Gastrocnemius medialis (tissue), 4 donors: ENCODE measurements at regions of chr2 and their contacts with region 1.

Region 1: DNA sequence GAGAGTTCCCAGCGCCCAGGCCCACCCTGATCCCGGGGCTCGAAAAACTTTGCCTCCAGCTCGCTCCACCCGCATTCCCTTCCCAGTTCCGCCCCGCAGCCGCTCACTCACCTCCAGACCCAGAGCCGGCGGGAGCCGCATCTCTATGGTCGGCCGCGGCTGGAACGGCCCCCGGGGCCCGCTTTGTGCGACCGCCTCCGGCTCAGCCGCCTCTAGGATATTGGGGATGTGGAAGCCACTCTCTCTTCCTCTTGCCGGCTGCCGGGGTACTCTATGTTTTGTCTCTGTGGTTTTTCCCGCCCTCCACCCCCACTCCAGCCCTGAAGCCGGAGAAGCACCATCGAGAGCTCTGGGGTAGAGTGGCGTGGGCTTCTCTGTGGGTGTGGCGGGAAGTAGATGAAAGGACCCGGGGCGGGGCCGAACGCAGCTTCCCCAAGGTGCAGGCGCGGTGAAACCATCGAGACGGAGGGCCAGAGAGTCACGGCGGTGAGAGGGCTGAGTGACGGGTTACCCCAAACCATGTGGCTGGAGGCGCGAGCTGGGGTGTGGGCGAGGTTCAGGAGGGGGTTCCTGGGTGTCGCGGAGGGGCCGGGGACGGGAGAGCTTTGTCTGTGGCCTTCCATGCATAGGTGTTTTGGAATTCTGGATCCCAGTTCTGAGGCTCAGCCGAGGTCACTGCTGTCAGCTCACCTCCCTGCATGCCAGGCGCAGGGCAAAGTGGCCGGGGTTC is at the starts of genes BCS1L and ZNF142:
- DNase-seq: peak; percentile 91 to 92
- ATAC-seq: peak; percentile 73 to 77
- H3K4me3 ChIP-seq: peak within 1 kb of the TSS; percentile 76 to 93 (median 84)
- H3K27ac ChIP-seq: peak within 1 kb of the TSS; percentile 95 to 98 (median 97)
- H3K4me1 ChIP-seq: peaks cover 41 to 45% of the 10 kb centered on the region in 2 donors
- H3K27me3 ChIP-seq: no peaks in the 10 kb centered on the region
- CTCF ChIP-seq: no peak
- POLR2A ChIP-seq: peak; percentile 89 to 90
- total RNA-seq, gene BCS1L: 19.6 to 46.9 (median 22.4) TPM
- total RNA-seq, gene ZNF142: 13.2 to 46.6 (median 34.0) TPM

Region 2: DNA sequence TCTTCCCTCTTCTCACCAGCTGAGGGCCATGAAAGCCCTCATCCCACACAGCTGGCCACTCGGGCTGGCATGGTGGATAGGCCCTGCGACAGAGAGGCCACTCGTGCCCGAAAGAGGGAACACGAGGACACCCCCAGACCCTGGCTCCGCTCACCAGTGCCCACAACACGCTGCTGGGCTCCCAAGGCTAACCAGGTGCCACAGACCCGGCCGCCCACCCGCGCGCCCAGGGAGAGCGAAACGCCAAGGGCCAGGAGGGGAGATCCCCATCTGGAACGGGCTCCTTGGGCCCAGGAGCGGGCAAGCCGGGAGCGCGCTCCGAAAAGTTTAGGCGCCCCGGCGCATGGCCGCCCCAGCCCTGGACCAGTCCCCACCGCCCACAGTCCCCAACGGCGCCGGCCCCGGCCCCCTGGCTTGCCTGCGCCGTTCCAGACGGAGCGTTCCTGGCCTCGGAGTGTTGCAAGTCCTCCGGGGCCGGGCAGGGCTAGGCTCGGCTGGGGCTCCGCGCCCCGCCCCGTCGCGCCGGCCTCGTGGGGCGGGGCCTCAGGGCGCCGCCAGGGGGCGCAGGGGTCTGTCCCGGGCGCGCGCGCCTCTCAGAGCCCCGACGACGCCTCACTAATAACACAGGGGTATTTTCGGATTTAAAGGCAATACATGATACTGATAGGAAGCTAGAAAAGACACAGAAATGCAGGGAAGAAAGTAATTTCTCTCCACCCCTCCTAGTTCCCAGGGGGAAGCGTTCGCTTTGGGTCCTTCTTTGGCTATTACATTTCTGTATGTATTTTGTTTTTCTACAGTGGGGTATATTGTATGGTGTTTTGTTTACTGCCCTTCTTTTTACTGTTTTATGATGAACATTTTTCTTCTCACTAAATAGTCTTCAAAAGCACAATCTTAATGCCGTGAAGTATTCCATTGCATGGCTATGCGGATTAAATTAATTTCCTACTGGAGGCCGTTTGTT is 367.1 kb before region 1 on chr2 and contains the start of gene TMBIM1:
- in situ Hi-C with region 1: loop called in 3 of 4 experiments (anchors 25 kb)
- intact Hi-C with region 1: loop called (anchors 5 kb)
- DNase-seq: peak; percentile 56 to 78
- ATAC-seq: peak; percentile 74 to 83
- H3K4me3 ChIP-seq: peak within 1 kb of the TSS; percentile 71 to 100 (median 96)
- H3K27ac ChIP-seq: peak within 1 kb of the TSS; percentile 93 to 100 (median 98)
- H3K4me1 ChIP-seq: peaks cover 43 to 48% of the 10 kb centered on the region in 2 donors
- H3K27me3 ChIP-seq: no peaks in the 10 kb centered on the region
- CTCF ChIP-seq: peak; percentile 75 to 100 (median 98)
- POLR2A ChIP-seq: peak; percentile 89 to 95
- total RNA-seq, gene TMBIM1: 142 to 296 (median 215) TPM

Region 3: DNA sequence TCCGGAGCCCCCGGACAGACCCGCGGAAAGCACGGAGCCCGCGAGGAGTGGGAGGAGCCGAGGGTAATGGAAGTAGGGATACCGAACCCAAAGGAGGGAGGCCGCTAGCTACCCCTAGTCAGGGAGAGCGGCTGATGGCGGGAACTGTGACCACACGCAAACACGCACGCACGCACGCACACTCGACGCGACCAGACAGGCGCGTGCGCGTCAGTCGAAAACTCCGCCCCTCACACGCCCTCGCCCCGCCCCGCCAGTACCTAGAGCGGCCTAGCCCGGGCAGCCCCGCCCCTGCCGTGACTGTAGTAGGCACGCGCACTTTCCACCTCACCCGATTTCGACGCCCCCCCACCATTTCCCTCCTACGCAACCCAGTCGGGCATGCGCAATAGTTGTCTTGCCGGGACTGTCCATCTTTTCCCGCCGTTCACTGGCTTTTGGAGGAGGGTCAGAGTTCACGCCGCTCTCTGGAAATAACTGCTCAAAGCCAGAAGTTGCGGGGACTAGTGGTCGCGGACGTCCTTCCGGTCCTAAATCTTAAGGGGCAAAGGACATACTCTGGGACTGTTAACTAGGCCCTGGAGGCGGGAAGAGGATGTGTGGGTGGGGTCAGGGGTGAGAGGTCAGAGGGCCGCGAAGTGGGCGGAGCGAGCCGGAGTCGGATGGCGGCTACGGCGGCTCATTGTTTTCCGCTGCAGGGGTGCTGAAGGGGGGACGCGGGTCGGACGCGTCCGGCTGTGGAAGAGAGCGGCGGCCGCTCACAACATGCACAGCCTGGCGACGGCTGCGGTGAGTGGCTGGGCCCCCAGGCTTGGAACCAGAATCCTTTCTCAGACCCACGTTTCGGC is 91.0 kb before region 1 on chr2 and contains the starts of genes CNOT9 and USP37:
- in situ Hi-C with region 1: no loop called
- intact Hi-C with region 1: loop called (anchors 2 kb)
- DNase-seq: peak; percentile 99
- ATAC-seq: peak; percentile 89 to 95
- H3K4me3 ChIP-seq: peak within 1 kb of the TSS; percentile 77 to 90 (median 78)
- H3K27ac ChIP-seq: peak within 1 kb of the TSS; percentile 94 to 96 (median 96)
- H3K4me1 ChIP-seq: peaks cover 31 to 44% of the 10 kb centered on the region in 2 donors
- H3K27me3 ChIP-seq: no peaks in the 10 kb centered on the region
- CTCF ChIP-seq: no peak
- POLR2A ChIP-seq: peak; percentile 75
- total RNA-seq, gene CNOT9: 10.4 to 28.4 (median 20.5) TPM
- total RNA-seq, gene USP37: 7.0 to 12.4 (median 8.0) TPM

Region 4: GRCh38 chr2:218607436-218608115 is 51.8 kb before region 1 on chr2 and contains the start of gene PLCD4:
- in situ Hi-C with region 1: no loop called
- intact Hi-C with region 1: loop called (anchors 5 kb)
- DNase-seq: peak; percentile 70 to 89
- ATAC-seq: peak; percentile 65 to 81
- H3K4me3 ChIP-seq: peak within 1 kb of the TSS; percentile 46 to 60 (median 54)
- H3K27ac ChIP-seq: peak within 1 kb of the TSS; percentile 87 to 89 (median 88)
- H3K4me1 ChIP-seq: peaks cover 47 to 60% of the 10 kb centered on the region in 2 donors
- H3K27me3 ChIP-seq: no peaks in the 10 kb centered on the region
- CTCF ChIP-seq: no peak
- POLR2A ChIP-seq: peak; percentile 73 to 84
- total RNA-seq, gene PLCD4: 21.6 to 60.9 (median 43.7) TPM

Region 5: DNA sequence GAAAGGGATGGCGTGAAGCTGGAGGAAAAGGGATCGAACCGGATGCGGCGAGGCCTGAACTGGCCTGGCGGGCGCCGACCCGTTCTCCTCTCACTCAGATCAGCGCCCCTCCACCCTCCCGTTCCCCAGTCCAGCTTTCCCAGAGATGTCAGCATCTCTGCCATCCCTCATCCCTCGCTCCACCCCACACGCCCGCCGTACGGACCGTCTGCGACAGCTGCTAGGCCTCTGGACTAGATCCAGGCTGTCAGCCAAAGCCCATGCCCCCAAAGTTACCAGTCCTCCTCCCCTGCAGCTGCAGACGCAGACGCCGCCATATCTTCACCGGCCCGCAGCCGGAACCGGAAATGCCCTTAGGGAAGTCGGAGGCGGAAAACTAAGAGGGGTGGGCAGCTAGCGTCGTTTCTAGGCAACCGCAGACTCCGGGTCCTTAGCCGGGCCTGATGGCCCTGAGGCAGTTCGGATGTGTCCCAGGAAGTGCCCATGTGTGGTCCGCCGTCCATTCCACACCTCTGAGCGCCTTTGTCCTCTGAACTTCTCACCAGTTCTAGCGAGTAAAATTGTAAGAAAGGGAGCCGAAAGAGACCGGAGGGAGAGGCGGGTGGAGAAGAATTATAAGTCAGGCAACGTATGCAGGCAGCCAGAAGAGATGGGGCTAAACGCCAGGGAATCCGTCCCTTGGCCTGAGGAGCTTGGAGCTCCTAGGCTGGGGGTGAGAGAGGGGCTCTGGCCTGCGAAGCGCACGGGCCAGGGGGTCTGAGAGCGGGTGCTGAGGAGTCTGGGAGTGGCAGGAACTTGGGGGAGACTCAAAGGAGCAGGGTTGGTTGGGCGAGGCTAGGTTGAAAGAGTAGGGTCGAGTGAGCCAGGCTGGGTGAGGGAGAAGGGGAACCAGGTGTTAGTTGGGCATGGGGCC is 12.5 kb after region 1 on chr2 and contains the starts of genes RNF25 and STK36:
- in situ Hi-C with region 1: no loop called
- intact Hi-C with region 1: loop called (anchors 1 kb)
- DNase-seq: peak; percentile 70 to 75
- ATAC-seq: peak; percentile 97
- H3K4me3 ChIP-seq: peak within 1 kb of the TSS; percentile 76 to 97 (median 89)
- H3K27ac ChIP-seq: peak within 1 kb of the TSS; percentile 73 to 84 (median 82)
- H3K4me1 ChIP-seq: peaks cover 13% of the 10 kb centered on the region in 2 donors
- H3K27me3 ChIP-seq: no peaks in the 10 kb centered on the region
- CTCF ChIP-seq: no peak
- POLR2A ChIP-seq: peak; percentile 50 to 79
- total RNA-seq, gene RNF25: 11.7 to 39.1 (median 26.1) TPM
- total RNA-seq, gene STK36: 3.0 to 16.3 (median 7.6) TPM

Region 6: DNA sequence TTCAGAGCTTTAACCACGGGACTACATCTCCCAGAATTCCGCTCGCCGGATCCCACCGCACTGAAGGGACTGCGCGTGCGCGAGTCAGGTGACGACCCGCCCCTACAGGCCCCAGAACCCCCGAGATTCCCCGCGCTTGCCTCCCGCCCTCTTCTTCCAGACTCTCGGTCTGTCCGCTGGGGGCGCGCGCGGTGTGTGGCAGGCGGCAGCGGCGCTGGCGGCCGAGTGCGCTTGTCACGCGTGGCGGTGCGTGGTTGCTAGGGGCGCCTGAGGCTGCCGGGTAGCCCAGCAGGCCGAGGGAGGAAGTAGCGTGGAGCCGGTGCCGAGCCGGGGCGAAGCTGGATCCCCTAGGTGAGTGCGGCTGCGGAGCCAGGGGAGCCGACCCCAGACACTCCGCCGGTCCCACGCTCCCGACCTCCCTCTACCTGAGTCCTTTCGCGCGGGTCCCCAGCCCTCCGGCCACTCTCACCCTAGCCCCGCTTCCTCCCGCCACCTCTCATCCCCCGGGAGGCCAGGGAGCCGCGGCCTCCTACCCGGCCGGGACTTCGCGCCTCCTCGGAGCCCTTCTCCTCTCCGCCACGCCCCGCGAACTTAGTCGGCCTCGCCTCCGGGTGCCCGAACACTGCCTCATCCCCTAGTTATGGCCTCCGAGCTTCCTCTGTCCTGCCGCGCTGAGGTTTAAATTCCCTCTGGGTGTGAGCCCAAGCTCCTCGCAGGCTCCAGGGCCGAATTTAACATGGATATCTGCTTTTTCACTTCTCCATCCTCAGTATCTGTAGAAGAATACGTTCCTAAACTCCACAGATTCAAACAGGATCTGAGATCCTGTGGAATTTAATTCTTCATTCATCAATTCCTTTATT is 51.5 kb after region 1 on chr2 and contains the start of gene TTLL4:
- in situ Hi-C with region 1: no loop called
- intact Hi-C with region 1: loop called (anchors 2 kb)
- DNase-seq: peak; percentile 96 to 97
- ATAC-seq: peak; percentile 97 to 98
- H3K4me3 ChIP-seq: peak within 1 kb of the TSS; percentile 70 to 90 (median 83)
- H3K27ac ChIP-seq: peak within 1 kb of the TSS; percentile 81 to 92 (median 86)
- H3K4me1 ChIP-seq: peaks cover 9% of the 10 kb centered on the region in 2 donors
- H3K27me3 ChIP-seq: no peaks in the 10 kb centered on the region
- CTCF ChIP-seq: peak; percentile 84 to 95 (median 88)
- POLR2A ChIP-seq: peak; percentile 55 to 69
- total RNA-seq, gene TTLL4: 4.4 to 16.2 (median 6.4) TPM

Region 7: DNA sequence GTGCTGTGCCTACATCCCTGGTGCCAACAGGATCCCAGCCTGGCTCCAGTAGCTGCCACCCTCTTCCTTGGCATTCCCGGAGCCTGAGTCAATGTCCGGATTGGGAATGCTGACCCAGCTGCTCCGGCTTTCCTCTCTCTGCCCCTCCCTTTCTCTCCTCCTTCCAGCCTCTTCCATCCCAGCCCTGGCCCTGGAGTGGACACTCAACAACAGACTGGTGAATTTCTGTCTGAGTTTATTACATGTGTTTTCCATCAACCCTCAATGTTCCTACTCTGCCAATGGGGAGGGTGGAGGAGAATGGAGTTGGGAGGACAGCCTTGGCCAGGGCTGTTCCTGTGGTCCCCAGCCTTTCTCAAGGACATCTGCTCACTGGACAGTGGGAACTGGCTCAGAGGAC is 173.1 kb after region 1 on chr2:
- in situ Hi-C with region 1: no loop called
- intact Hi-C with region 1: loop called (anchors 5 kb)
- DNase-seq: peak; percentile 77 to 91
- ATAC-seq: peak; percentile 66 to 76
- H3K4me3 ChIP-seq: no peak overlapping the region
- H3K27ac ChIP-seq: peak overlapping the region; percentile 95
- H3K4me1 ChIP-seq: peaks cover 64 to 65% of the 10 kb centered on the region in 2 donors
- H3K27me3 ChIP-seq: no peaks in the 10 kb centered on the region
- CTCF ChIP-seq: no peak
- POLR2A ChIP-seq: no peak